K562 (cell line): ENCODE measurements at regions of chr2 and their contacts with region 1.

Region 1: GRCh38 chr2:6896930-6897759 is 19.6 kb downstream of the RSAD2 start:
- DNase-seq: peak in 3 of 4 experiments; percentile 36 to 67 (median 39)
- ATAC-seq: peak; percentile 63
- H3K4me3 ChIP-seq: no peak overlapping the region
- H3K27ac ChIP-seq: no peak overlapping the region
- H3K4me1 ChIP-seq: peaks cover 4 to 13% of the 10 kb centered on the region in 2 experiments; a peak in 4 of 5 replicates
- H3K27me3 ChIP-seq: no peaks in the 10 kb centered on the region
- CTCF ChIP-seq: peak; percentile 48 to 87 (median 64); a peak in 5 of 6 replicates
- EP300 ChIP-seq: no peak
- POLR2A ChIP-seq: no peak
- RAD21 ChIP-seq: peak; percentile 84 to 90

Region 2: GRCh38 chr2:6826081-6826913 is 70.8 kb before region 1 on chr2:
- CTCF ChIA-PET with region 1: no interaction called
- POLR2A ChIA-PET with region 1: no interaction called
- in situ Hi-C with region 1: no loop called
- intact Hi-C with region 1: loop called (anchors 1 kb)
- DNase-seq: peak; percentile 72 to 88 (median 80)
- ATAC-seq: peak; percentile 98
- H3K4me3 ChIP-seq: no peak overlapping the region
- H3K27ac ChIP-seq: peak overlapping the region; percentile 66
- H3K4me1 ChIP-seq: peaks cover 0 to 3% of the 10 kb centered on the region in 2 experiments; a peak in 1 of 5 replicates
- H3K27me3 ChIP-seq: peaks cover 4 to 11% of the 10 kb centered on the region in 2 experiments; a peak in 4 of 5 replicates
- CTCF ChIP-seq: peak; percentile 75 to 96 (median 89)
- EP300 ChIP-seq: peak; percentile 89
- POLR2A ChIP-seq: no peak
- RAD21 ChIP-seq: peak; percentile 92 to 98

Region 3: DNA sequence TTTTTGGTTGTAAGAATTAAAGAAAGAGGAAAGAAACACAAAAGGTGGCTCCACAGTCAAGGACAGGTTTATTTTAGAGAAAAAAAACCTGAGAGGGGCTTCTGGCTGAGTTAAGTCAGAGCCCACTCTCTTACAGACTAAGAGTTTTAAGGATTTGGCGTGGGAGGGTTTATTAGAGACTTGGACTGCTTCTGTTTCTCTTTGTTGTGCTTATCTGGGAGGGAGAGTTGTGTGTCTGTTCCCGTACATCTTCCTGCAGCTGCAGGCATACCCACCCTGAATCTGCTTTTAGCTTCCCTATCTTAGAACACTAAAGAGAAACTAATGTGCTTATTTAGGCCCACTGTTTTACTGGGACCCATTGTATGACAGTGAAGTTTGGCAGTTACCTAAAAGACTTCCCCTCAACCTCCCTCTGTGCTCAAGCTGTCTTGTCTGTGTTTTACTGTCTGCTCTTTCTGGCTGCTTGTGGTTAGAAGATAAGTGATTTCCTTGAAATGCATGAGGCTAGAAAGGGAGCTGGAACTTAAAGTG is 16.9 kb before region 1 on chr2:
- CTCF ChIA-PET with region 1: no interaction called
- POLR2A ChIA-PET with region 1: interaction called, 4 read pairs
- in situ Hi-C with region 1: no loop called
- intact Hi-C with region 1: loop called (anchors 2 kb)
- DNase-seq: peak in 2 of 4 experiments; percentile 63 to 91
- ATAC-seq: peak; percentile 91
- H3K4me3 ChIP-seq: no peak overlapping the region
- H3K27ac ChIP-seq: peak overlapping the region; percentile 77
- H3K4me1 ChIP-seq: peaks cover 17 to 53% of the 10 kb centered on the region in 2 experiments; a peak in 4 of 5 replicates
- H3K27me3 ChIP-seq: no peaks in the 10 kb centered on the region
- CTCF ChIP-seq: no peak
- EP300 ChIP-seq: peak; percentile 91
- POLR2A ChIP-seq: no peak
- RAD21 ChIP-seq: peak; percentile 7 to 24; a peak in 3 of 4 replicates

Region 4: DNA sequence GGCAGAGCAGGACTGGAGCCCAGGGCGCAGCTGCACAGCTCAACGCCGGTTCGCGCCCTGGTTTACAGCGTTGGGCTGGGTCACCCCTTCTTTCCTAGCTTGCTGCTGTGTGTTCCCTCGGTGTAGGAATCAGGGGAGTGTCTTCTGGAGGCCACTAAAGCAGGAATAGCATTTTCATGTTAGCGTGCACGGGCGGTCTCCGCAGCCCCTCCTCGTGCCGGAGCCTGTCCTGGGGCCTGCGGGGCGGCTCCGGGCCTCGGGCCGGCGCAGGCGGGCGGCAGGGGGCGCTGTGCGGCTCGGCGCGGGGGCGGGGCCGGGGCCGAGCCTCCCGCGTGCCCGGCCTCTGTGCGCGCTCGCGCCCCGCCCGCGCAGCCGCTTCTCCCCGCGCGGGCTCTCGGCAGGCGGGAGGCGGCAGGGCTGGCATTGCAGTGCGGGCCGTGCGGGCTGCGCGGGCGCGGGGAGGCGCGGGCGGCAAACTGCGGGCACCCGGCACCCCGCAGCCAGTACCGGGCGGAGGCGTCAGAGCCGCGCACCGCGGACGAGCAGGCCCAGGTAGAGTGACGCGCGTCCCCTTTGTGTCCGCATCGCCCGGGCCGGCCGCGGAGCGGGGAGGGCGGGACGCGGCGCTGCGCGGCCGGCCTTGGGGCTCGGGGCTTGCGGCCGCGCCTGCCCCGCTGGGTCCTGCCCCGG is 20.1 kb after region 1 on chr2 and contains the start of gene RNF144A:
- CTCF ChIA-PET with region 1: no interaction called
- POLR2A ChIA-PET with region 1: interaction called, 5 read pairs
- in situ Hi-C with region 1: no loop called
- intact Hi-C with region 1: loop called (anchors 2 kb)
- DNase-seq: peak; percentile 75 to 93 (median 92)
- ATAC-seq: peak; percentile 88
- H3K4me3 ChIP-seq: peak within 1 kb of the TSS; percentile 61
- H3K27ac ChIP-seq: peak within 1 kb of the TSS; percentile 51; the same call in 1 of the 3 replicates
- H3K4me1 ChIP-seq: peaks cover 3 to 25% of the 10 kb centered on the region in 2 experiments; a peak in 4 of 5 replicates
- H3K27me3 ChIP-seq: 0 out of 5 replicates have a peak, but pooled peaks cover 0 to 4% of the 10 kb centered on the region in 2 experiments
- CTCF ChIP-seq: peak; percentile 25 to 54 (median 53); a peak in 4 of 6 replicates
- EP300 ChIP-seq: no peak
- POLR2A ChIP-seq: no peak
- RAD21 ChIP-seq: peak in 1 of 2 experiments; percentile 39; a peak in 2 of 4 replicates
- polyA plus RNA-seq, gene RNF144A: 0.96 to 1.4 TPM

Region 5: GRCh38 chr2:7037340-7038333 is 140.5 kb after region 1 on chr2:
- CTCF ChIA-PET with region 1: no interaction called
- POLR2A ChIA-PET with region 1: no interaction called
- in situ Hi-C with region 1: no loop called
- intact Hi-C with region 1: loop called (anchors 2 kb)
- DNase-seq: peak; percentile 68 to 77 (median 70)
- ATAC-seq: peak; percentile 98
- H3K4me3 ChIP-seq: no peak overlapping the region
- H3K27ac ChIP-seq: no peak overlapping the region
- H3K4me1 ChIP-seq: no peaks in the 10 kb centered on the region
- H3K27me3 ChIP-seq: no peaks in the 10 kb centered on the region
- CTCF ChIP-seq: peak; percentile 79 to 86 (median 82)
- EP300 ChIP-seq: no peak
- POLR2A ChIP-seq: no peak
- RAD21 ChIP-seq: peak; percentile 24 to 64

Region 6: GRCh38 chr2:7083577-7084509 is 186.7 kb after region 1 on chr2:
- CTCF ChIA-PET with region 1: no interaction called
- POLR2A ChIA-PET with region 1: no interaction called
- in situ Hi-C with region 1: no loop called
- intact Hi-C with region 1: loop called (anchors 5 kb)
- DNase-seq: peak; percentile 11 to 68 (median 30)
- ATAC-seq: peak; percentile 95
- H3K4me3 ChIP-seq: no peak overlapping the region
- H3K27ac ChIP-seq: no peak overlapping the region
- H3K4me1 ChIP-seq: no peaks in the 10 kb centered on the region
- H3K27me3 ChIP-seq: peaks cover 2 to 6% of the 10 kb centered on the region in 2 experiments; a peak in 2 of 5 replicates
- CTCF ChIP-seq: peak; percentile 71 to 86 (median 82)
- EP300 ChIP-seq: no peak
- POLR2A ChIP-seq: no peak
- RAD21 ChIP-seq: peak; percentile 64 to 88